ENCODE measurements at regions of chr6 and their contacts with region 1.

Region 1: GRCh38 chr6:125114248-125114858 is 39.2 kb upstream of the TPD52L1 start:
- DNase-seq: peak; percentile 67
- H3K4me3 Mint-ChIP-seq: no peak overlapping the region
- H3K27ac Mint-ChIP-seq: no peak overlapping the region
- H3K4me1 Mint-ChIP-seq: no peaks in the 10 kb centered on the region
- H3K27me3 Mint-ChIP-seq: no peaks in the 10 kb centered on the region

Region 2: GRCh38 chr6:124738482-124738881 is 375.9 kb before region 1 on chr6:
- CTCF ChIA-PET with region 1: no interaction called
- DNase-seq: no peak
- H3K4me3 Mint-ChIP-seq: no peak overlapping the region
- H3K27ac Mint-ChIP-seq: no peak overlapping the region
- H3K4me1 Mint-ChIP-seq: no peaks in the 10 kb centered on the region
- H3K27me3 Mint-ChIP-seq: no peaks in the 10 kb centered on the region

Region 3: DNA sequence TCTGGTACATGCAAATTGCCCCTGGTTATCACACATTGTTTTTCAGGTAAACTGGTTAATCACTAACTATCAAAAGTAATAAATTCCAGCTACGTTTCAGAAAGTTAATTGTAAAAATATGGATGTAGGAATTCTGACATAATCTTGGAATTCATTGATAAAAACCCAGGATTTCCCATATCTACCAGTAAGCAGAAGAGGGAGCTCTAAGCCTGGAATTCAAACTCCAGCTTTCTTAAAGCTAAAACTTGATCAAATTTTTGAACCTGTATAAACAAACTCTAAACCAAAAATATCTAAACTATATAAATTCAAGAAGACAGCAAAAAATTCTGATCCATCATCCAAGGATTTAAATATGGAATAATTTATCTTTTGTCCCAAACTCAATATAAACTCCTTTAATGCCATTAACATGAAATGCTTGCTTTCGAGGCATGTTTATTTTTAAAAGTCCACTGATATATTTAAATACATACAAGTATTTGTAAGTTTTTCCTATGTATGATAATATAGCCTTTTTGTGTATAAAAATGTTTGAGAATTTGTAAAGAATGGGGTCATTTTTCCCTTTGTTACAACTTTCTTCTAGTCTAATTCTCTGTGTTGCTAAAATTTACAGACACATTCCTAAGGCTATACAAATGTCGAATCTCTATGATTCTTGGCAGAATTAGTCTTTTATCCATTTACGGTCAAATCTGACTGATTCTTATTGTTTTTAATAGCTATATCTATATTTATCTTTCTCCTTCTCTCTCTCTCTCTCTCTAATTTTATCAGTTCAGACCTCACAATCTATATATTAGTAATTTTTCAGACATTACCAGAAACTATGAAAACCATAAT is 243.5 kb before region 1 on chr6:
- CTCF ChIA-PET with region 1: interaction called, 36 read pairs
- DNase-seq: no peak
- H3K4me3 Mint-ChIP-seq: no peak overlapping the region
- H3K27ac Mint-ChIP-seq: no peak overlapping the region
- H3K4me1 Mint-ChIP-seq: no peaks in the 10 kb centered on the region
- H3K27me3 Mint-ChIP-seq: no peaks in the 10 kb centered on the region

Region 4: GRCh38 chr6:125066964-125067363 is 47.4 kb before region 1 on chr6:
- CTCF ChIA-PET with region 1: interaction called, 13 read pairs
- DNase-seq: peak; percentile 69
- H3K4me3 Mint-ChIP-seq: no peak overlapping the region
- H3K27ac Mint-ChIP-seq: no peak overlapping the region
- H3K4me1 Mint-ChIP-seq: no peaks in the 10 kb centered on the region
- H3K27me3 Mint-ChIP-seq: peaks cover 5% of the 10 kb centered on the region

Measured in activated naive CD4-positive, alpha-beta T cell treated with anti-CD3 and anti-CD28 coated beads, Interleukin-2, amount 10 ng/mL, durations not matched to agents 7 days and 5 days (primary cell).